Activated T-helper 2 cell treated with anti-CD3 and anti-CD28 coated beads, Interferon-gamma antibody, Interleukin-2, Interleukin-4, amounts not matched to agents 10 μg/mL and 5 μg/mL and 100 μg/mL, durations not matched to agents 14 hours and 24 hours and 36 hours (primary cell): ENCODE measurements at regions of chr3 and their contacts with region 1.

Region 1: DNA sequence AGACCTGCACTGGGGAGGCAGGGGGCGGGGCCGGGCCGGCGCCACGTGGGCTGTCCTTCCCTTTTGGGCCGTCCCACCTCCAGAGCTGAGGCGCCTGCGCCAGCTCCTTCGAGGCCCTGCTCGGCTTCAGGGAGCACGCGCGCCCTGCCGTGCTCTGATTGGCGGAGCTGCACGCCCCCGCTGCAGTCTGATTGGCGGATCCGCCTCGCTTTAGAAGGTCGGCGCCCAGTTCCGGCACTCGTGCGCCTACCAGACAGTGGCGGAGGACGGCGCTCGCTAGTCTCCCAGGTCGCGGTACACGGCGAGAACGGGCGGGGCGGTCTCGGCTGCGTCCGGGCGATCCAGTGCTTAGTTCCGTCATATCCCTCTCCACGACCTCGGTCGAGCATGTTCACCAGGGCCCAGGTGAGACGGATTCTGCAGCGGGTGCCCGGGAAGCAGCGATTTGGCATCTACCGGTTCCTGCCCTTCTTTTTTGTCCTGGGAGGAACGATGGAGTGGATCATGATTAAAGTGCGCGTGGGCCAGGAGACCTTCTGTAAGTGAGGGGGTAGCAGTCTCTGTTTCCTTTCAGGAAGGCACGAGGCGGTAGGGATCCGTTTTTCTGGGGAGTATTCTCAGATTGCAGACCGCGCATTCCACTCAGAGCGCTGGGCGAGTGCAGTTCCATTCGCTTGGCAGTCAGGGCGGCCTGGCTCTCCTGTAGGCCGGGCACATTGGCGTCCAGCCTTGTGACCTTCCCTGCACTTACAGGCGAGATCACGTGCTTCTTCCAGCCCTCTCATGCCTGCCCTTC is at the start of gene UQCC5:
- DNase-seq: peak; percentile 98
- H3K4me3 Mint-ChIP-seq: peak within 1 kb of the TSS; percentile 100
- H3K27ac Mint-ChIP-seq: peak within 1 kb of the TSS; percentile 99
- H3K4me1 Mint-ChIP-seq: peaks cover 46% of the 10 kb centered on the region
- H3K27me3 Mint-ChIP-seq: no peaks in the 10 kb centered on the region
- total RNA-seq, gene UQCC5: 12.5 and 16.4 TPM in 2 replicates

Region 2: DNA sequence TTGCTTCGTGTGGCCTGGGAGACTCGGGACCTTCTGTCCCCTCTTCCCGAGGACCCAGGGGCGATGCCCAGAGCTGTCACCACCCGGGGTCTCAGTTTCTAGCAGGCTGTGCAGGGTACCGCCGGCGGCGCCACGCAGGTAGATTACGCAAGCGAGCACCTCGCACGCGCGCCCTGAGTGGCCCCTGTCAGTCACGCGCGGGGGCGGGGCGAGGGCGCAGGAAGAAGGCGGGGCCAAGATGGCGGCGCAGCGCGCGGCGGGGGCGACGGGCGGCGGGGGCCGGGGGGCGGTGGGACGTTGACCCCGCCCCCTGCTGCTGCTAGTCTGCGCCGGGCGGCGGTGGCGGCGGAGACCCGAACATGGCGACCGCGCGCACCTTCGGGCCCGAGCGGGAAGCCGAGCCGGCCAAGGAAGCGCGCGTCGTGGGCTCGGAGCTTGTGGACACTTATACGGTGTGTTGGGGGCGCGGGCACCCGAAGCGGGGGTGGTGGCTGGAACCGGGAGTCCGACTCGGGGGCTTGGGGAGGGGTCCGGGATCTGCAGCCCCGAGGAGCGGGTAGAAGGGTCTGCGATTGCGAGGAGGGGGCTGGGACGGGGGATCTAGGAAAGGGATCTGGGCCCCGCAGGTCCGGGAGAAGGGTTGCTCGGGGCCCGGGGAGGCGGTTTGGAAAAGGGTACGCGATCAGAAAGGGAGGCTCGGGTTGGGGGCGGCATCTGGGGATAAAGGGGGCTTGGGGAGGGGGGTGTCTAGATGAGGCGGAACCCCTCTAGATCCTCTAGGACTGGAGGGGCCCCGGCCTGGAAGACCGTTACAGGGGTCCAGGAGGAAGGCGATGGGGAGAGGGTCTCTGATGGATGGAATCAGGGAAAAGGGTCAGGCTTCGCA is 81.0 kb before region 1 on chr3 and contains the start of gene NISCH:
- intact Hi-C with region 1: loop called (anchors 1 kb)
- DNase-seq: peak; percentile 93
- H3K4me3 Mint-ChIP-seq: peak within 1 kb of the TSS; percentile 94
- H3K27ac Mint-ChIP-seq: peak within 1 kb of the TSS; percentile 92
- H3K4me1 Mint-ChIP-seq: peaks cover 27% of the 10 kb centered on the region
- H3K27me3 Mint-ChIP-seq: no peaks in the 10 kb centered on the region
- total RNA-seq, gene NISCH: 70.0 and 73.4 TPM in 2 replicates

Region 3: DNA sequence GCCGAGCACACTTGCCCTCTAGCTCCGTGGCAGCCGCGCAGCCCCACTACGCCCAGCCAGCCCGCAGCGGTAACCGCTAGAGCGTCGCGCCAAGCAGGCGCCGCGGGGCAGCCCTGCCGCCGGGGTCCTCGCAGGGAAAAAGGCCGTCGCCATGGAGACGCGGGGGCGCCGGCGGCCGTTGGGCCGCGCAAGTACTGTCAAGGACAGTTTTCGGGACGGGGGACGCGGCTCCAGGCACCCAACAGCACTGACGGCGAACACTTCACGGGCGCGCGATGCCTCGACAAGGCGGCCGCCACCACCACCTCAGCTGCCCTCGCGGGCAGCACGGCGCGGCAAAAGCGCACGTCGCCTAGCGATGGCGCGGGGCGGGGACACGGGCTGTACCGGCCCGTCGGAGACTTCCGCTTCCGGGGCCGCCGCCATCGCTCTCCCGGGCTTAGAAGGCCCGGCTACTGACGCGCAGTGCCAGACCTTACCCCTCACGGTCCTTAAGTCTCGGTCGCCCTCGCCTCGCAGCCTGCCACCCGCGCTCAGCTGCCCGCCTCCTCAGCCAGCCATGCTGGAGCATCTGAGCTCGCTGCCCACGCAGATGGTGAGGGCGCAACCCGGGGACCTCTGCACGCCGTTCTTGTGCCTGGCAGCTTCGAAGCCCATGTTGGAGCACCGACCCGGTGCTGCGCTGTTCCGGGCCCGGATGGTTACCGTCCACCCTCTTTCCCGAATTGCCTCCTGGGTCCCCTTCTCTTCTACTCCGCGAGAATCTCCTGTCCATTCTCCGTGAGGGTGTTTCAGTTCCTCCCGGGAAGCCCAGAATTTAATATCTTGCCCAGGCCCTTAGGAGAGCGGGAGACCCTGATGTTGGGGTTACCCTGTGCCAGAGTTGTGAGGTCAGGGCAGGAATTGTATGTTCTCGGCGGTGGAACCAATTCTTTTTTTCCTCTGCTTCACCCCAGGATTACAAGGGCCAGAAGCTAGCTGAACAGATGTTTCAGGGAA is 169.4 kb after region 1 on chr3 and contains the starts of genes GLT8D1 and SPCS1:
- intact Hi-C with region 1: loop called (anchors 2 kb)
- DNase-seq: peak; percentile 84
- H3K4me3 Mint-ChIP-seq: peak within 1 kb of the TSS; percentile 96
- H3K27ac Mint-ChIP-seq: peak within 1 kb of the TSS; percentile 89
- H3K4me1 Mint-ChIP-seq: peaks cover 24% of the 10 kb centered on the region
- H3K27me3 Mint-ChIP-seq: no peaks in the 10 kb centered on the region
- total RNA-seq, gene GLT8D1: 37.6 and 38.7 TPM in 2 replicates
- total RNA-seq, gene SPCS1: 124 and 125 TPM in 2 replicates

Region 4: GRCh38 chr3:52897130-52898122 is 360.9 kb after region 1 on chr3 and contains the start of gene STIMATE:
- intact Hi-C with region 1: loop called (anchors 10 kb)
- DNase-seq: peak; percentile 85
- H3K4me3 Mint-ChIP-seq: peak within 1 kb of the TSS; percentile 99
- H3K27ac Mint-ChIP-seq: peak within 1 kb of the TSS; percentile 72
- H3K4me1 Mint-ChIP-seq: peaks cover 40% of the 10 kb centered on the region
- H3K27me3 Mint-ChIP-seq: no peaks in the 10 kb centered on the region
- total RNA-seq, gene STIMATE: 17.4 and 17.6 TPM in 2 replicates